Activated naive CD4-positive, alpha-beta T cell treated with anti-CD3 and anti-CD28 coated beads for 36 hours (primary cell): ENCODE measurements at regions of chr16 and their contacts with region 1.

Region 1: DNA sequence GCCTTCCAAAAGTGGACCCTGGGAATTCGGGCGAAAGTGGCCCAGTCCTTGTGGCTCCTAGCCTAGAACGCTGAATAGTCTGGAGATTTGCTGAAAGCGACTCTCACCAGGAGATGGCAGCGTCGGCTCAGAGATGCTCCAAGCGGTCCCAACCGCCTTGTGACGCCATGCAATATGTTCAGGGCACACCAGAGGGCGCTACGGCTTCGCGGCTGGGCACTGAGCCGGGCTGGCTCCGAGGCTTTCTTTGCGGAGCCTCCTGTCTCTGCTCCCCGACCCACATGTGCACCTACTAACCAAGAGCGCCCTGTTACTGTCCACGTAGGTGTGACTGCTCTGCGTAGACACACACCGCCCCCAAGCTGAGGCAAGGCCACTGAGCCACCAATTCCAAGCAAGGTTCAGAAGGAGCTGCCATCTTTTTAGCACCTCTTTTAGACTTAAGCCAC is 36.9 kb downstream of the SYCE1L start:
- DNase-seq: peak; percentile 93
- H3K4me3 Mint-ChIP-seq: no peak overlapping the region
- H3K27ac Mint-ChIP-seq: no peak overlapping the region
- H3K4me1 Mint-ChIP-seq: peaks cover 3% of the 10 kb centered on the region
- H3K27me3 Mint-ChIP-seq: peaks cover 19% of the 10 kb centered on the region

Region 2: GRCh38 chr16:77190478-77191258 is 45.4 kb before region 1 on chr16 and contains the start of gene MON1B:
- CTCF ChIA-PET with region 1: no interaction called
- intact Hi-C with region 1: no loop called
- DNase-seq: peak; percentile 96
- H3K4me3 Mint-ChIP-seq: peak within 1 kb of the TSS; percentile 82
- H3K27ac Mint-ChIP-seq: peak within 1 kb of the TSS; percentile 99
- H3K4me1 Mint-ChIP-seq: peaks cover 29% of the 10 kb centered on the region
- H3K27me3 Mint-ChIP-seq: no peaks in the 10 kb centered on the region
- total RNA-seq, gene MON1B: 69.6 to 71.0 TPM

Region 3: GRCh38 chr16:77308163-77308561 is 72.1 kb after region 1 on chr16:
- CTCF ChIA-PET with region 1: interaction called, 3 read pairs
- intact Hi-C with region 1: loop called (anchors 1 kb)
- DNase-seq: peak; percentile 10
- H3K4me3 Mint-ChIP-seq: no peak overlapping the region
- H3K27ac Mint-ChIP-seq: peak overlapping the region; percentile 83
- H3K4me1 Mint-ChIP-seq: peaks cover 19% of the 10 kb centered on the region
- H3K27me3 Mint-ChIP-seq: peaks cover 20% of the 10 kb centered on the region

Region 4: GRCh38 chr16:77437859-77438258 is 201.8 kb after region 1 on chr16:
- CTCF ChIA-PET with region 1: interaction called, 6 read pairs
- intact Hi-C with region 1: loop called (anchors 2 kb)
- DNase-seq: no peak
- H3K4me3 Mint-ChIP-seq: no peak overlapping the region
- H3K27ac Mint-ChIP-seq: no peak overlapping the region
- H3K4me1 Mint-ChIP-seq: no peaks in the 10 kb centered on the region
- H3K27me3 Mint-ChIP-seq: peaks cover 38% of the 10 kb centered on the region

Region 5: DNA sequence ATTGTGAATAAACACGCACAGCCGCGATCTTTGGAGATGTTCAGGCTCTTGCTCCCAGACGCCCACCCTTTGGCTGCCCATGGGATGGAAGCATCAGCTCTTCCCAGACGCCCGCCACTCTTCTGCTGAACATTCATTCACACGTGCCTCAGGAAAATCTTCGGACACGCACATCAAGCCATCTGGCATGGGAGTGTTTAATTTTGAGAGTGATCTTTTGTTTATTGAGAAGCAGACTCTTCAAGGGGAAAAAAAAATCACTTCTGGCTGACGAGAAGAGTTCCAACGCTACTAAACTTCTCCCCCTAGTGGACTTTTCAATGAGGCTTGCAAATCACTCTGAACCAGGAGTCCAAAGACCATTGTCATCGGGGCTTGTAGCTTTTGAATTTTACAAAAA is 424.2 kb after region 1 on chr16:
- CTCF ChIA-PET with region 1: no interaction called
- intact Hi-C with region 1: loop called (anchors 1 kb)
- DNase-seq: no peak
- H3K4me3 Mint-ChIP-seq: no peak overlapping the region
- H3K27ac Mint-ChIP-seq: no peak overlapping the region
- H3K4me1 Mint-ChIP-seq: no peaks in the 10 kb centered on the region
- H3K27me3 Mint-ChIP-seq: peaks cover 33% of the 10 kb centered on the region

Region 6: GRCh38 chr16:77971306-77972271 is 735.5 kb after region 1 on chr16:
- CTCF ChIA-PET with region 1: no interaction called
- intact Hi-C with region 1: loop called (anchors 1 kb)
- DNase-seq: peak; percentile 85
- H3K4me3 Mint-ChIP-seq: no peak overlapping the region
- H3K27ac Mint-ChIP-seq: no peak overlapping the region
- H3K4me1 Mint-ChIP-seq: peaks cover 3% of the 10 kb centered on the region
- H3K27me3 Mint-ChIP-seq: peaks cover 14% of the 10 kb centered on the region

Region 7: GRCh38 chr16:78099372-78100161 is 863.5 kb after region 1 on chr16 and contains the start of gene WWOX:
- CTCF ChIA-PET with region 1: interaction called, 3 read pairs
- intact Hi-C with region 1: loop called (anchors 10 kb)
- DNase-seq: peak; percentile 95
- H3K4me3 Mint-ChIP-seq: peak within 1 kb of the TSS; percentile 84
- H3K27ac Mint-ChIP-seq: peak within 1 kb of the TSS; percentile 88
- H3K4me1 Mint-ChIP-seq: peaks cover 24% of the 10 kb centered on the region
- H3K27me3 Mint-ChIP-seq: peaks cover 3% of the 10 kb centered on the region
- total RNA-seq, gene WWOX: 20.2 to 21.4 TPM